ENCODE measurements at regions of chr15 and their contacts with region 1.

Region 1: GRCh38 chr15:39887832-39888231 is 32.2 kb downstream of the GPR176 start:
- DNase-seq: no peak
- H3K4me3 ChIP-seq: no peak overlapping the region
- H3K27ac ChIP-seq: peak overlapping the region in 1 of 2 experiments; percentile 35; a peak in 1 of 4 replicates
- H3K4me1 ChIP-seq: peaks cover 2 to 7% of the 10 kb centered on the region in 2 experiments; a peak in 1 of 4 replicates
- H3K27me3 ChIP-seq: no peaks in the 10 kb centered on the region
- CTCF ChIP-seq: peak; percentile 59
- EP300 ChIP-seq: no peak
- RAD21 ChIP-seq: peak; percentile 68

Region 2: DNA sequence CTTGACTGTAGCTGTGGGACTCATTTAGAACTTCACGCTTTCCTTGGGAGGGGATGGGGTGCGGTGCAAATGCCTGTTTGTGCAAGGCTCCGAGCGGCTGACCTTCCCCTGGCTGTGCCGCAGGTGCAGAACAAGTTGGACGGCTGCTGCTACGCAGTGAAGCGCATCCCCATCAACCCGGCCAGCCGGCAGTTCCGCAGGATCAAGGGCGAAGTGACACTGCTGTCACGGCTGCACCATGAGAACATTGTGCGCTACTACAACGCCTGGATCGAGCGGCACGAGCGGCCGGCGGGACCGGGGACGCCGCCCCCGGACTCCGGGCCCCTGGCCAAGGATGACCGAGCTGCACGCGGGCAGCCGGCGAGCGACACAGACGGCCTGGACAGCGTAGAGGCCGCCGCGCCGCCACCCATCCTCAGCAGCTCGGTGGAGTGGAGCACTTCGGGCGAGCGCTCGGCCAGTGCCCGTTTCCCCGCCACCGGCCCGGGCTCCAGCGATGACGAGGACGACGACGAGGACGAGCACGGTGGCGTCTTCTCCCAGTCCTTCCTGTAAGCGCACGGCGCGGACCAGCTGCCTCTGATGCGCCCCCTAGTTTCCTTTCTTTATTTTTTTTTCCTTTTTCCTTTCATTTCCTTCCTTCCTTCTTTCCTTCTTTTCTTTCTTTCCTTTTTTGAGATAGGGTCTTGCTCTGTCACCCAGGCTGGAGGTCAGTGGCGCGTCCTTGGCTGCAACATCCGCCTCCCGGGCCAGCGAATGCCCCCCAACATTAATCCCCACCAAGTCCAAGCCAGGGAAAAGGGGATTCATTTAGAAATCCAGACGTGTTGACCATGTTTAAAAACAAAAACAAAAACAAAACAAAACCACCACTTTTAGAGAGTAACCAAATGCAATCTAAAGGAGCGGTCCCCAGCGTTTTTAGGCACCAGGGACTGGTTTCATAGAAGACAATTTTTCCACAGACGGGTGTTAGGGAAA is 88.8 kb after region 1 on chr15:
- CTCF ChIA-PET with region 1: interaction called, 11 read pairs
- POLR2A ChIA-PET with region 1: no interaction called
- DNase-seq: peak; percentile 89
- H3K4me3 ChIP-seq: peak overlapping the region; percentile 48 to 49; a peak in 3 of 4 replicates
- H3K27ac ChIP-seq: peak overlapping the region; percentile 29 to 53
- H3K4me1 ChIP-seq: peaks cover 7 to 16% of the 10 kb centered on the region in 2 experiments
- H3K27me3 ChIP-seq: no peaks in the 10 kb centered on the region
- CTCF ChIP-seq: peak; percentile 68
- EP300 ChIP-seq: no peak
- RAD21 ChIP-seq: peak; percentile 55

Measured in SK-N-SH (cell line).